ENCODE measurements at regions of chr4 and their contacts with region 1.

Region 1: DNA sequence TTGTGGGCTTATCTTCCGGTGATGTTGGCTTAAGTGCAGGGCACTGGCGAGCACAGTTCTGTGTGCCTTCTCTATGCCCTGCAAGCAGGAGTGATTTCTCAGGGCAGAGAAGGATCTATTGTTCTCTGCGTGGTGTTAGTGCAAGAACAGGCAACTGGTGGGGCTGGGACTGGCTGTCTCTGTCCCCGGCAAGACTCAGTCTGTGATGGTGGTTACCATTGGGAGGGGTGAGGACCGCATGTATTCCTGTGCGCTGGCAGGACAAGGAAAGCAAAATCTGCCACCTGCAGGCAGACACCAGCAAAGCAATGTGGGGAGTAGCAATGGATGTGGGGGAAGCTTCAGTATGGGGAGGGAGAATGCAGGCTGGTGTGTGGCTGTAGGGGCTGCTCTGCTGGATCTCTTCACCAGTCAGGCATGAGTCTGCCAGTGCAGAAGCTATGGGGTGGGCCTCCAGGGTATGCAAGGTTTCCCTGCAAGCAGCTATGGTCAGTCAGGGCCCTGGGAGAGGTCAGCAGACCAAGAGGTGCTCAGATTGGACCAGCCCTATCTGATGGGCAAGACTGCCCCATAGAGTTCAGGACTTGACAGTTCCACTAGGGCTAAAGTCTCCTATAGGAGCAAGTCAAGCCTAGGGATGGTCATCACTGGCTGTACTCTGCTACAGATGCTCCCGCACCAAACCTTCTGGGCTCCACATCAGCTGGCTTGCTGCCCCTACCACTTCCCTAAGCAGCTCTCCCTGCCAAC is 16.8 kb downstream of the PF4 start:
- DNase-seq: peak; percentile 82
- ATAC-seq: peak; percentile 98
- H3K4me3 Mint-ChIP-seq: no peak overlapping the region
- H3K27ac Mint-ChIP-seq: no peak overlapping the region
- H3K4me1 Mint-ChIP-seq: peaks cover 3% of the 10 kb centered on the region
- H3K27me3 Mint-ChIP-seq: peaks cover 6% of the 10 kb centered on the region
- CTCF ChIP-seq: peak; percentile 55

Region 2: GRCh38 chr4:73976716-73977115 is 11.7 kb after region 1 on chr4:
- CTCF ChIA-PET with region 1: interaction called, 13 read pairs
- POLR2A ChIA-PET with region 1: no interaction called
- DNase-seq: no peak
- ATAC-seq: no peak
- H3K4me3 Mint-ChIP-seq: no peak overlapping the region
- H3K27ac Mint-ChIP-seq: no peak overlapping the region
- H3K4me1 Mint-ChIP-seq: peaks cover 27% of the 10 kb centered on the region
- H3K27me3 Mint-ChIP-seq: no peaks in the 10 kb centered on the region
- CTCF ChIP-seq: no peak